ENCODE measurements at regions of chr12 and their contacts with region 1.

Region 1: GRCh38 chr12:17853054-17853453 is 236.9 kb downstream of the RERGL start:
- DNase-seq: no peak
- H3K4me3 ChIP-seq: no peak overlapping the region
- H3K27ac ChIP-seq: no peak overlapping the region
- H3K4me1 ChIP-seq: no peaks in the 10 kb centered on the region
- H3K27me3 ChIP-seq: no peaks in the 10 kb centered on the region
- CTCF ChIP-seq: no peak
- POLR2A ChIP-seq: no peak

Region 2: DNA sequence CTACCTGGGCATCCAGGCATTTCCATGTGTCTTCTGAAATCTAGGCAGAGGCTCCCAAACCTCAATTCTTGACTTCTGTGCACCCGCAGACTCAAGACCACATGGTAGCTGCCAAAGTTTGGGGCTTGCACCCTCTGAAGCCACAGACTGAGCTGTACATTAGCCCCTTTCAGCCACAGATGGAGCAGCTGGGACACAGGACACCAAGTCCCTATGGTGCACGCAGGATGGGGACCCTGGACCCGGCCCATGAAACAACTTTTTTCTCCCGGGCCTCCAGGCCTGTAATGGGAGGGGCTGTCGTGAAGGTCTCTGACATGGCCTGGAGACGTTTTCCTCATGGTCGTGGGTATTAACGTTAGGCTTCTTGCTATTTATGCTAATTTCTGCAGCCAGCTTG is 93.1 kb before region 1 on chr12:
- intact Hi-C with region 1: loop called (anchors 2 kb)
- DNase-seq: no peak
- H3K4me3 ChIP-seq: no peak overlapping the region
- H3K27ac ChIP-seq: no peak overlapping the region
- H3K4me1 ChIP-seq: no peaks in the 10 kb centered on the region
- H3K27me3 ChIP-seq: no peaks in the 10 kb centered on the region
- CTCF ChIP-seq: no peak
- POLR2A ChIP-seq: no peak

Measured in spleen (tissue), 13 donors.